Common myeloid progenitor, CD34-positive (primary cell): ENCODE measurements at regions of chr3 and their contacts with region 1.

Region 1: GRCh38 chr3:197801891-197802778 is 11.1 kb downstream of the LRCH3 start:
- DNase-seq: peak; percentile 57 to 85 (median 73)
- H3K4me3 ChIP-seq: peak overlapping the region in 2 of 7 experiments; percentile 14 to 45
- H3K27ac ChIP-seq: peak overlapping the region in 1 of 2 experiments; percentile 29
- H3K4me1 ChIP-seq: peaks cover 0 to 25% (median 11%) of the 10 kb centered on the region in 4 experiments
- H3K27me3 ChIP-seq: no peaks in the 10 kb centered on the region

Region 2: DNA sequence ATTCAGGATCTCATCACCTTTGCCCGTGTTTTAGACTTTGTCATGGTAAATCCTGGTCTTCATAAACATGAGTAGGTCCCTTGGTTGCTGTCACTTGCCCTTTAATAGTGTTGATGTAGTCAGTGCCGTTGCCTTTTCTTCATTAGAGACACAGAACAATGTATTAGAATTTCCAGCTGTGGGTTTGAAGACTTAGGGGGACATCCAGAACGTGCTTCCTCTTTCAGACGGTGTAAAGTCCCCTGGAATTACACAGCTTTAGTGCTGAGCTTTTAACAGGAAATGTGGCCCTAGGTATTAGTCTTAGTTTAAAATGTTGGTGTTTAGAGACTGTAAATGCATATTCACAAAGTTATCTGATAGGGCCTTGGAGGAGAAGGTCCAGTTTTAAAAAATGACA is 19.9 kb before region 1 on chr3:
- CTCF ChIA-PET with region 1: interaction called, 10 read pairs
- POLR2A ChIA-PET with region 1: interaction called, 3 read pairs
- DNase-seq: peak in 2 of 3 donors; percentile 63 to 66
- H3K4me3 ChIP-seq: no peak overlapping the region
- H3K27ac ChIP-seq: peak overlapping the region in 1 of 2 experiments; percentile 16
- H3K4me1 ChIP-seq: peaks cover 0 to 4% (median under 1%) of the 10 kb centered on the region in 4 experiments
- H3K27me3 ChIP-seq: no peaks in the 10 kb centered on the region

Region 3: GRCh38 chr3:197791113-197791891 is 10.8 kb before region 1 on chr3 and contains the start of gene LRCH3:
- CTCF ChIA-PET with region 1: interaction called, 26 read pairs
- POLR2A ChIA-PET with region 1: interaction called, 3 read pairs
- DNase-seq: peak; percentile 83 to 87 (median 84)
- H3K4me3 ChIP-seq: peak within 1 kb of the TSS; percentile 80 to 95 (median 92)
- H3K27ac ChIP-seq: peak within 1 kb of the TSS; percentile 93 to 97
- H3K4me1 ChIP-seq: peaks cover 9 to 24% (median 13%) of the 10 kb centered on the region in 4 experiments
- H3K27me3 ChIP-seq: no peaks in the 10 kb centered on the region

Region 4: GRCh38 chr3:198046120-198046857 is 244.2 kb after region 1 on chr3:
- CTCF ChIA-PET with region 1: no interaction called
- POLR2A ChIA-PET with region 1: no interaction called
- DNase-seq: no peak
- H3K4me3 ChIP-seq: no peak overlapping the region
- H3K27ac ChIP-seq: no peak overlapping the region
- H3K4me1 ChIP-seq: no peaks in the 10 kb centered on the region
- H3K27me3 ChIP-seq: no peaks in the 10 kb centered on the region